HCT116 (cell line): ENCODE measurements at regions of chr3 and their contacts with region 1.

Region 1: GRCh38 chr3:56342475-56342874 is 125.8 kb downstream of the ERC2 start:
- DNase-seq: no peak
- ATAC-seq: no peak
- H3K4me3 ChIP-seq: no peak overlapping the region
- H3K27ac ChIP-seq: no peak overlapping the region
- H3K4me1 ChIP-seq: no peaks in the 10 kb centered on the region
- H3K27me3 ChIP-seq: peaks cover 25% of the 10 kb centered on the region
- CTCF ChIP-seq: no peak
- POLR2A ChIP-seq: no peak
- RAD21 ChIP-seq: no peak

Region 2: DNA sequence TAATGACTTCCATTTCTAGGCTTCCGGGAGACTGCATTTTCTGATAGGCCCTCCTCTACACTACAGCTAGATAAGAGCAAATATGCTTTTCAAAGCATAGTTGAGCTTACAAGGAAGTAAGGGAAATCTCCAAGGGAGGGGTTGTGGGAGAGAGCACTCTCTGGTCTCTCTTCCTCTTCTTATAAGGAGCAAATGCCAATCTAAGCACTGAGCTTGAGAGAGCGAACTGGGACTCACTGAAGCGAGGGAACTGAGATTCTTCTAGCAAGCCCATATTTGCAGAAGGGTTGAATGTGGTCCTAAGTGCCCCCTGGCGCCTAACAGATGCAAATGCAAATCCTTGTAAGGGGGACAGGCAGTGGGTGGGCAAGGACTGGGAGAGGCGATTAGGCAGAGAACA is 39.0 kb before region 1 on chr3:
- CTCF ChIA-PET with region 1: no interaction called
- POLR2A ChIA-PET with region 1: no interaction called
- RAD21 ChIA-PET with region 1: no interaction called
- intact Hi-C with region 1: no loop called
- DNase-seq: peak; percentile 15
- ATAC-seq: peak; percentile 83
- H3K4me3 ChIP-seq: no peak overlapping the region
- H3K27ac ChIP-seq: no peak overlapping the region
- H3K4me1 ChIP-seq: no peaks in the 10 kb centered on the region
- H3K27me3 ChIP-seq: 0 out of 2 replicates have a peak, but pooled peaks cover 8% of the 10 kb centered on the region
- CTCF ChIP-seq: peak in 2 of 3 experiments; percentile 73 to 76; a peak in 4 of 6 replicates
- POLR2A ChIP-seq: no peak
- RAD21 ChIP-seq: peak; percentile 47

Region 3: GRCh38 chr3:56443372-56443771 is 100.9 kb after region 1 on chr3:
- CTCF ChIA-PET with region 1: interaction called, 3 read pairs
- POLR2A ChIA-PET with region 1: no interaction called
- RAD21 ChIA-PET with region 1: interaction called in 1 of 2 experiments, 4 read pairs
- intact Hi-C with region 1: loop called (anchors 1 kb)
- DNase-seq: no peak
- ATAC-seq: no peak
- H3K4me3 ChIP-seq: no peak overlapping the region
- H3K27ac ChIP-seq: no peak overlapping the region
- H3K4me1 ChIP-seq: no peaks in the 10 kb centered on the region
- H3K27me3 ChIP-seq: peaks cover 8% of the 10 kb centered on the region; the same call in 1 of the 2 replicates
- CTCF ChIP-seq: no peak
- POLR2A ChIP-seq: no peak
- RAD21 ChIP-seq: no peak

Region 4: DNA sequence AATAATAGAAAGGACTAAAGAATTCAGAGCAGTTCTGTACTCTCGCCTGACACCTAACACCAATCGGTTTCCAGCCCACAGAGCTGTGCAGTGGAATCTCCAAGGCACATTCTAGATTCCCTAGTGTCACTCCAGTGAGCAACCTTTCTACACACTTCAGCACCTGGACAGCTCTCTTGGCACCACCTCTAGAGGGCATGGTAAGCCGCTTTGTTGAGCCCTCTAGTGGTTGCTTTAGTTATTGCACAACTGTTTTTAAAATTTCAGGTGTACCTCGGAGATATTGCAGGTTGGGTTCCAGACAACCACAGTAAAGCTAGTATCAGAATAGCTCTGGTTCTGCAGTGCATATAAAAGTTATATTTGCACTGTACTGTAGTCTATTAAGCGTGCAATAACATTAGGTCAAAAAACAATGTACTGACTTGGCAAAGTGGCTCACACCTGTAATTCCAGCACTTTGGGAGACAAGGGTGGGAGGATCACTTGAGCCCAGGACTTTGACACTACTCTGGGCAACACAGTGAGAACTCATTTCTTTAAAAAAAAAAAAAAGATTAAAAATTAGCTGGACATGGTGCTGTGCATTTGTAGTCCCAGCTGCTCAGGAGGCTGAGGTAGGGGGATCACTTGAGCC is 152.3 kb after region 1 on chr3:
- CTCF ChIA-PET with region 1: interaction called, 4 read pairs
- POLR2A ChIA-PET with region 1: no interaction called
- RAD21 ChIA-PET with region 1: no interaction called
- intact Hi-C with region 1: loop called (anchors 2 kb)
- DNase-seq: peak; percentile 73
- ATAC-seq: peak; percentile 90
- H3K4me3 ChIP-seq: no peak overlapping the region
- H3K27ac ChIP-seq: no peak overlapping the region
- H3K4me1 ChIP-seq: no peaks in the 10 kb centered on the region
- H3K27me3 ChIP-seq: peaks cover 30% of the 10 kb centered on the region; the same call in 1 of the 2 replicates
- CTCF ChIP-seq: peak; percentile 93 to 95 (median 94)
- POLR2A ChIP-seq: no peak
- RAD21 ChIP-seq: peak; percentile 60

Region 5: GRCh38 chr3:56547486-56547885 is 205.0 kb after region 1 on chr3:
- CTCF ChIA-PET with region 1: interaction called, 4 read pairs
- POLR2A ChIA-PET with region 1: no interaction called
- RAD21 ChIA-PET with region 1: no interaction called
- intact Hi-C with region 1: loop called (anchors 1 kb)
- DNase-seq: peak; percentile 8
- ATAC-seq: peak; percentile 63; the same call in 1 of the 2 replicates
- H3K4me3 ChIP-seq: no peak overlapping the region
- H3K27ac ChIP-seq: no peak overlapping the region
- H3K4me1 ChIP-seq: no peaks in the 10 kb centered on the region
- H3K27me3 ChIP-seq: peaks cover 23% of the 10 kb centered on the region
- CTCF ChIP-seq: peak; percentile 17 to 42 (median 24); a peak in 4 of 6 replicates
- POLR2A ChIP-seq: no peak
- RAD21 ChIP-seq: peak; percentile 45

Region 6: GRCh38 chr3:56960234-56960917 is 617.9 kb after region 1 on chr3:
- CTCF ChIA-PET with region 1: no interaction called
- POLR2A ChIA-PET with region 1: no interaction called
- RAD21 ChIA-PET with region 1: no interaction called
- intact Hi-C with region 1: no loop called
- DNase-seq: no peak
- ATAC-seq: no peak
- H3K4me3 ChIP-seq: no peak overlapping the region
- H3K27ac ChIP-seq: no peak overlapping the region
- H3K4me1 ChIP-seq: no peaks in the 10 kb centered on the region
- H3K27me3 ChIP-seq: no peaks in the 10 kb centered on the region
- CTCF ChIP-seq: no peak
- POLR2A ChIP-seq: no peak
- RAD21 ChIP-seq: no peak